GM12878 (cell line): ENCODE measurements at regions of chr1 and their contacts with region 1.

Region 1: DNA sequence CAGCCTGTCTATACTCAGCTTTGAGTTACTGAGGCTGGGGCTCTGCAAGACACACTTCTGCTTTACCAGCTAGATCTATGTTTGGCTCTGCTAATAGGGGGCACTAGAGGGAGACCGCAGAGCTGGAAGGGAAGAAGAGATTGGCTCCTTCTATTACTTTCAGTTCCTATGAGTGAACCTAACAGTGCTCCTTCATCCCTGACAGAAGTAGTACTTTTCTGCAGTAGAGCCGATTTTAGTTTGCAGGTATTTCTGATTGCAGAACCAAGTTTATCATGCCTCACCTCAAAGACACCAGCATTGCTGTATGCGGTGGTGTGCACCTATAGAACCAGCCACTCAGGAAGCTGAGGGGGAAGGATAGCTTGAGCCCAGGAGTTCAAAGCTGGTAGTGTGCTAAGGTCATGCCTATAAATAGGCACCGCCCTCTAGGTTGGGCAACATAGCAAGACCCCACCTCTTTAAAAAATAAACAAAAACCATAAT is 5.7 kb upstream of the ZDHHC18 start:
- DNase-seq: peak; percentile 77
- ATAC-seq: peak; percentile 100
- H3K4me3 ChIP-seq: no peak overlapping the region
- H3K27ac ChIP-seq: peak overlapping the region; percentile 23
- H3K4me1 ChIP-seq: peaks cover 11% of the 10 kb centered on the region
- H3K27me3 ChIP-seq: no peaks in the 10 kb centered on the region
- CTCF ChIP-seq: peak; percentile 65 to 68 (median 67)
- EP300 ChIP-seq: peak in 1 of 2 experiments; percentile 45; a peak in 1 of 4 replicates
- POLR2A ChIP-seq: no peak
- RAD21 ChIP-seq: peak; percentile 42

Region 2: DNA sequence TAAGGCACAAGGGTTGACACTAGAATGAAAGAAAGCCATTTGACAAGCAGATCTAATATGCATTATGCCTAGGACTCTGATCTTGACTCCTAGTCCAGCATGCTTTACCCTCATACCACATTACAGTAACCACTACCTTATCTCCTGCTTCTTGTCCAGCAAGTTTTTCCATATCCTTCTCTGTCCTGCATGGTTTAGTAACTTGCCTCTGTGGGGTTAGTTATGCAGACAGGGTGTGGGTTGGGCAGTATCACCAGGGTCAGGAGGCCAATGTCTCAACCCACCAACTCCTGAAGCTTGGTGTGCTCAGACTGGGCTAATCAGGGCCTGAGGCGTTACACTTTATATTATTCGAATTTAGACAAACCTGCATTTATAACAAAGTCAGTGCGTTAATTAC is 369.9 kb before region 1 on chr1:
- CTCF ChIA-PET with region 1: no interaction called
- POLR2A ChIA-PET with region 1: no interaction called
- RAD21 ChIA-PET with region 1: no interaction called
- SMC1A ChIA-PET with region 1: no interaction called
- in situ Hi-C with region 1: no loop called
- intact Hi-C with region 1: no loop called
- DNase-seq: no peak
- ATAC-seq: no peak
- H3K4me3 ChIP-seq: no peak overlapping the region
- H3K27ac ChIP-seq: no peak overlapping the region
- H3K4me1 ChIP-seq: no peaks in the 10 kb centered on the region
- H3K27me3 ChIP-seq: no peaks in the 10 kb centered on the region
- CTCF ChIP-seq: no peak
- EP300 ChIP-seq: no peak
- POLR2A ChIP-seq: no peak
- RAD21 ChIP-seq: no peak

Region 3: GRCh38 chr1:26482921-26483680 is 337.7 kb before region 1 on chr1:
- CTCF ChIA-PET with region 1: no interaction called
- POLR2A ChIA-PET with region 1: no interaction called
- RAD21 ChIA-PET with region 1: no interaction called
- SMC1A ChIA-PET with region 1: no interaction called
- in situ Hi-C with region 1: no loop called
- intact Hi-C with region 1: no loop called
- DNase-seq: no peak
- ATAC-seq: no peak
- H3K4me3 ChIP-seq: no peak overlapping the region
- H3K27ac ChIP-seq: no peak overlapping the region
- H3K4me1 ChIP-seq: no peaks in the 10 kb centered on the region
- H3K27me3 ChIP-seq: no peaks in the 10 kb centered on the region
- CTCF ChIP-seq: no peak
- EP300 ChIP-seq: no peak
- POLR2A ChIP-seq: no peak
- RAD21 ChIP-seq: no peak

Region 4: GRCh38 chr1:26799479-26800142 is 21.2 kb before region 1 on chr1:
- CTCF ChIA-PET with region 1: interaction called, 11 read pairs
- POLR2A ChIA-PET with region 1: interaction called, 3 read pairs
- RAD21 ChIA-PET with region 1: interaction called, 8 read pairs
- SMC1A ChIA-PET with region 1: interaction called, 4 read pairs
- in situ Hi-C with region 1: no loop called
- intact Hi-C with region 1: no loop called
- DNase-seq: no peak
- ATAC-seq: peak; percentile 53
- H3K4me3 ChIP-seq: no peak overlapping the region
- H3K27ac ChIP-seq: peak overlapping the region; percentile 0; the same call in 1 of the 2 replicates
- H3K4me1 ChIP-seq: peaks cover 11% of the 10 kb centered on the region
- H3K27me3 ChIP-seq: no peaks in the 10 kb centered on the region
- CTCF ChIP-seq: no peak
- EP300 ChIP-seq: no peak
- POLR2A ChIP-seq: no peak
- RAD21 ChIP-seq: no peak

Region 5: GRCh38 chr1:26833432-26834405 is 12.9 kb after region 1 on chr1:
- CTCF ChIA-PET with region 1: interaction called, 63 read pairs
- POLR2A ChIA-PET with region 1: interaction called, 32 read pairs
- RAD21 ChIA-PET with region 1: interaction called, 26 read pairs
- SMC1A ChIA-PET with region 1: interaction called, 57 read pairs
- in situ Hi-C with region 1: no loop called
- intact Hi-C with region 1: no loop called
- DNase-seq: peak; percentile 88
- ATAC-seq: peak; percentile 88
- H3K4me3 ChIP-seq: peak overlapping the region; percentile 56; the same call in 1 of the 2 replicates
- H3K27ac ChIP-seq: peak overlapping the region; percentile 99
- H3K4me1 ChIP-seq: peaks cover 40% of the 10 kb centered on the region
- H3K27me3 ChIP-seq: no peaks in the 10 kb centered on the region
- CTCF ChIP-seq: peak; percentile 40 to 54 (median 46); a peak in 5 of 6 replicates
- EP300 ChIP-seq: no peak; a peak in 1 of 4 replicates
- POLR2A ChIP-seq: peak; percentile 84
- RAD21 ChIP-seq: peak; percentile 69